Mammary epithelial cell (primary cell): ENCODE measurements at regions of chr11 and their contacts with region 1.

Region 1: GRCh38 chr11:131851964-131852755 is 481.7 kb downstream of the NTM start:
- DNase-seq: no peak
- H3K4me3 ChIP-seq: no peak overlapping the region
- H3K27ac ChIP-seq: no peak overlapping the region
- H3K4me1 ChIP-seq: no peaks in the 10 kb centered on the region
- H3K27me3 ChIP-seq: no peaks in the 10 kb centered on the region
- CTCF ChIP-seq: no peak

Region 2: DNA sequence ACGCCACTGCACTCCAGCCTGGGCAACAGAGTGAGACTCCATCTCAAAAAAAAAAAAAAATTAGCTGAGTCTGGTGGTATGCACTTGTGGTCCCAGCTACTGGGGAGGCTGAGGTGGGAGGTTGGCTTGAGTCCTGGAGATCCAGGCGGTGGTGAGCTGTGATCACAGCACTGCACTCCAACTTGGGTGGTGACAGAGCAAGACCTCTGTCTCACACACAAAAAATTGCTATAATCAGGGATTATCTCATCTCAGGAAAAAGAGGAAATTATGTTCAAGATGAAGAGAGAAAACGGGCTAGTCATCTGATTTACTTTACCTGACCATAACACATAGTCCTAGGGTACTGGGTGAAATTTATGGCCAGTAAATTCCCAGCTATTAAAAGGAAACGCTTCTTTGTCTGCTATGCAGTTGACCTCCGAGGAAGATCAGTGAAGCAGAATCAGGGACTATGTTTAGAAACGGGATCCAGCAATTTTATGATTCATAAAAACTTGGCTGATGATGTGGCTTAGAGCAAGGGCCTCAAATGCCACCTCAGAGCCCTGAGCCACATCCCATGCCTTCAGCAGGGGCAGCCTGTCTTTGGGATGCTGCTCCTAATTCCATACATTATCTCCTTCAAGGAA is 95.6 kb before region 1 on chr11:
- CTCF ChIA-PET with region 1: no interaction called
- dilution Hi-C with region 1: loop called (anchors 5 kb)
- in situ Hi-C with region 1: no loop called
- intact Hi-C with region 1: no loop called
- DNase-seq: no peak
- H3K4me3 ChIP-seq: no peak overlapping the region
- H3K27ac ChIP-seq: no peak overlapping the region
- H3K4me1 ChIP-seq: no peaks in the 10 kb centered on the region
- H3K27me3 ChIP-seq: no peaks in the 10 kb centered on the region
- CTCF ChIP-seq: no peak

Region 3: GRCh38 chr11:131809203-131809918 is 42.8 kb before region 1 on chr11:
- CTCF ChIA-PET with region 1: no interaction called
- dilution Hi-C with region 1: no loop called
- in situ Hi-C with region 1: no loop called
- intact Hi-C with region 1: no loop called
- DNase-seq: peak; percentile 1
- H3K4me3 ChIP-seq: no peak overlapping the region
- H3K27ac ChIP-seq: no peak overlapping the region
- H3K4me1 ChIP-seq: peaks cover 20% of the 10 kb centered on the region
- H3K27me3 ChIP-seq: peaks cover 8% of the 10 kb centered on the region
- CTCF ChIP-seq: no peak